ENCODE measurements at regions of chr6 and their contacts with region 1.

Region 1: DNA sequence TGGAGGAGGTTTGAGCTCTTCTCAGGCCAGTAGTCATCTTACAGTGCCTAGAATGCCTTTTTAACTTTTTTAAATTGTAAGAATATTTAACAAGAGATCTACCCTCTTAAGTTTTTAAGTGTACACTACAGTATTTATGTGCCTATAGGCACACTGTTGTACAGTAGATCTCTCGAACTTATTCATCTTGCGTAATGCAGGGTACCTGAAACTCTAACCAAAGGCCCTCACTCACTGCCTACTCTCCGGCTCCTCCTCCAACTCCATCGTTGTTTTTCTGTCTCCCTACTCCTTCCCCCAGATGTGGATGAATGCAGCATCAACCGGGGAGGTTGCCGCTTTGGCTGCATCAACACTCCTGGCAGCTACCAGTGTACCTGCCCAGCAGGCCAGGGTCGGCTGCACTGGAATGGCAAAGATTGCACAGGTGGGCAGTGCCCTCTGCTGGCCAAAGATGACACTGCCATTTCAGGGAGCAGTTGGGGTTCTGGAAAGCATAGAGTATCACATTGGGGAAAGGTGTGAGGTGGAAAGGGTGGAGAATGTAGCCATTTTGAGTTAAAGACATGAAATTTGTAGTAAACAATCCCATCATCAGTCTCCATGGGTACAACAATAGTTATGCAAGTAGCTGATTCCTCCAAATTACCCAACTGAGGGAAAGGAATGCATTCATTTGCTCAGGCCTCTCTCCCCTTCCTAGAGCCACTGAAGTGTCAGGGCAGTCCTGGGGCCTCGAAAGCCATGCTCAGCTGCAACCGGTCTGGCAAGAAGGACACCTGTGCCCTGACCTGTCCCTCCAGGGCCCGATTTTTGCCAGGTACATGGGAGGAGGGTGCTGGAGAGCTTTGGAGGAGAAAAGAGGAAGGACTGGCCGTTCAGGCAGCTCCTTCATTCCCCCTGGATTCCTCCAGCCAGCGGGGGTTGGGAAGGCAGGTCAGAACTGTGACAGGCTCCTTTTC is 18.4 kb upstream of the ZNF76 start:
- DNase-seq: peak; percentile 75
- H3K4me3 Mint-ChIP-seq: no peak overlapping the region
- H3K27ac Mint-ChIP-seq: peak overlapping the region; percentile 73
- H3K4me1 Mint-ChIP-seq: peaks cover 11% of the 10 kb centered on the region
- H3K27me3 Mint-ChIP-seq: no peaks in the 10 kb centered on the region
- CTCF ChIP-seq: peak; percentile 97

Region 2: GRCh38 chr6:34819571-34820480 is 421.3 kb before region 1 on chr6:
- CTCF ChIA-PET with region 1: interaction called, 13 read pairs
- POLR2A ChIA-PET with region 1: no interaction called
- intact Hi-C with region 1: no loop called
- DNase-seq: no peak
- H3K4me3 Mint-ChIP-seq: no peak overlapping the region
- H3K27ac Mint-ChIP-seq: no peak overlapping the region
- H3K4me1 Mint-ChIP-seq: no peaks in the 10 kb centered on the region
- H3K27me3 Mint-ChIP-seq: no peaks in the 10 kb centered on the region
- CTCF ChIP-seq: no peak

Region 3: GRCh38 chr6:35139908-35140655 is 101.0 kb before region 1 on chr6:
- CTCF ChIA-PET with region 1: interaction called, 80 read pairs
- POLR2A ChIA-PET with region 1: no interaction called
- intact Hi-C with region 1: no loop called
- DNase-seq: peak; percentile 70
- H3K4me3 Mint-ChIP-seq: no peak overlapping the region
- H3K27ac Mint-ChIP-seq: no peak overlapping the region
- H3K4me1 Mint-ChIP-seq: peaks cover 4% of the 10 kb centered on the region
- H3K27me3 Mint-ChIP-seq: no peaks in the 10 kb centered on the region
- CTCF ChIP-seq: peak; percentile 91

Region 4: GRCh38 chr6:35185971-35186370 is 55.1 kb before region 1 on chr6:
- CTCF ChIA-PET with region 1: interaction called, 12 read pairs
- POLR2A ChIA-PET with region 1: no interaction called
- intact Hi-C with region 1: no loop called
- DNase-seq: no peak
- H3K4me3 Mint-ChIP-seq: no peak overlapping the region
- H3K27ac Mint-ChIP-seq: no peak overlapping the region
- H3K4me1 Mint-ChIP-seq: peaks cover 38% of the 10 kb centered on the region
- H3K27me3 Mint-ChIP-seq: no peaks in the 10 kb centered on the region
- CTCF ChIP-seq: no peak

Region 5: GRCh38 chr6:35218021-35218420 is 23.1 kb before region 1 on chr6:
- CTCF ChIA-PET with region 1: interaction called, 16 read pairs
- POLR2A ChIA-PET with region 1: no interaction called
- intact Hi-C with region 1: no loop called
- DNase-seq: no peak
- H3K4me3 Mint-ChIP-seq: no peak overlapping the region
- H3K27ac Mint-ChIP-seq: no peak overlapping the region
- H3K4me1 Mint-ChIP-seq: peaks cover 4% of the 10 kb centered on the region
- H3K27me3 Mint-ChIP-seq: peaks cover 19% of the 10 kb centered on the region
- CTCF ChIP-seq: no peak

Region 6: DNA sequence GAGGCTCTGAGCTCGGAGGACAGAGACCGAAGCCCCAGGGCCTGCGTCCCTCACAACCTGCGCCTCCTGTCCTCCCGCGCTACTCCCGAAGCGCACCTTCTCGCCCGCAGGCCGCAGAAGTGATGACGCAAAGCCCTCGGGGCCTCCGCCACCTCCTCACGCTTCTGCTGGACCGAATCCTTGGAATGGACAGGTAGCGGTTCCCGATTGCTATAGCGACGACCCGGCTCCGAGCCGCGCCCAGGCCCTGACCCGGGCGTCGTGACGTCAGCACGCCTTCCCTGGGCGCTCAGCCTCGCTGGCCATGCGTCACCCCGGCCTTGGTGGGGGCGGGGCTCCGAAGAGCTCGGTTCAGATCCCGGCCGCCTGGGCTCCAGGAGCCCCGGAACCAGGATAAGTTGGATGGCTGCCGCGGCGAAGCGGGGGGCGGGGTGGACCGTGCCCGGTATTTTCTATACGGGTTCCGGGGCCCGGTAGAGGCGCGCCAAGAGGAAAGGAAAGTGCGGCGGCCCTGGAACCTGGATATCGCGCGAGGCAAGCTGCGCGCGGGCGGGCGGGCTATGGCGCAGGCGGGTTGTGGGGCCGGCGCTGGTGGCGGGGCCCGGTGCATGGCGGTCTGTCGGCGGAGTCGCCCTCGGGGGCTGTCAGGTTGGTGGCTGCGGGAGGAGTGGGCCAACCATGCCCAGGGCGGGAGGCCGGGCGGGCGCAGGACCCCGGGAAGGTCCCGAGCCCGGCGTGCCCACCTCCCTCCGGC is 18.2 kb after region 1 on chr6 and contains the start of gene ZNF76:
- CTCF ChIA-PET with region 1: interaction called, 16 read pairs
- POLR2A ChIA-PET with region 1: interaction called, 5 read pairs
- intact Hi-C with region 1: no loop called
- DNase-seq: peak; percentile 97
- H3K4me3 Mint-ChIP-seq: peak within 1 kb of the TSS; percentile 88
- H3K27ac Mint-ChIP-seq: peak within 1 kb of the TSS; percentile 98
- H3K4me1 Mint-ChIP-seq: peaks cover 34% of the 10 kb centered on the region
- H3K27me3 Mint-ChIP-seq: no peaks in the 10 kb centered on the region
- CTCF ChIP-seq: no peak
- total RNA-seq, gene ZNF76: 28.0 and 28.4 TPM in 2 replicates

Region 7: GRCh38 chr6:35327349-35328027 is 86.4 kb after region 1 on chr6:
- CTCF ChIA-PET with region 1: no interaction called
- POLR2A ChIA-PET with region 1: no interaction called
- intact Hi-C with region 1: no loop called
- DNase-seq: peak; percentile 62
- H3K4me3 Mint-ChIP-seq: no peak overlapping the region
- H3K27ac Mint-ChIP-seq: no peak overlapping the region
- H3K4me1 Mint-ChIP-seq: no peaks in the 10 kb centered on the region
- H3K27me3 Mint-ChIP-seq: no peaks in the 10 kb centered on the region
- CTCF ChIP-seq: peak; percentile 36

Region 8: DNA sequence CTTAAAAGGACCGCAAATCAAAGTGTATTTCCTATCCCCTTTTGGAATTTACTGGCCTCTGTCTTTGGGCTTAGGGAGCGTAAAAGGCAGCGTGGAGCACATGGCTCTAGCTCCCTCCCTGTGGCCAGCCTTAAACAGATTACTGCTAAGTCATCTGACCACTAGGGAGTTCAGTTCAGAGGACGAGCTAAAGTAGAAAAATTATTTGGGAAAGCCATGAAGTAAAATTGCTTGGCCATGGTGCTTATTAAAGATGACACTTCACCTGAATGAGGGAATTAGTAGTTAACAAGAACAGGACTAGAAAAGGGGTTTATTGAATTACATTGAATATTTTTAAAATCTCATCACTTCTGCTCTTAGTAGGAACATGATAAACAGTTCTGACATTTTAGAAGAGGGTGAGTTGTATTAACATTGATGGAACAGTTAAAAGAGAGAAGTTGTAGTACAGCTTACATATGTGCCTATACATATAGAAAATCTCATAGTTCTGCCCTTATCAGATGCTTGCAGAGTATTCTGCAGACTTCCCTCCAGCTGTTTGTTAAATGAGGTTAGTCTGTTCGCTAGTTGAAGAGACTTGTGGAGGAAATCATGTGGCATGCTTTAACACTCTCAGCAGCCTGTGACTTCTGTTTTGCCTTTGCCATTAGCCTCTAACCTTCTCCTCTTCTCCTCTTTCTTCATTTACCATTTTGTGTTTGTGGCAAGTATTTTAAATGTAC is 858.0 kb after region 1 on chr6:
- CTCF ChIA-PET with region 1: no interaction called
- POLR2A ChIA-PET with region 1: no interaction called
- intact Hi-C with region 1: no loop called
- DNase-seq: no peak
- H3K4me3 Mint-ChIP-seq: no peak overlapping the region
- H3K27ac Mint-ChIP-seq: no peak overlapping the region
- H3K4me1 Mint-ChIP-seq: peaks cover 6% of the 10 kb centered on the region
- H3K27me3 Mint-ChIP-seq: no peaks in the 10 kb centered on the region
- CTCF ChIP-seq: no peak